HEK293 (cell line): ENCODE measurements at regions of chr11 and their contacts with region 1.

Region 1: DNA sequence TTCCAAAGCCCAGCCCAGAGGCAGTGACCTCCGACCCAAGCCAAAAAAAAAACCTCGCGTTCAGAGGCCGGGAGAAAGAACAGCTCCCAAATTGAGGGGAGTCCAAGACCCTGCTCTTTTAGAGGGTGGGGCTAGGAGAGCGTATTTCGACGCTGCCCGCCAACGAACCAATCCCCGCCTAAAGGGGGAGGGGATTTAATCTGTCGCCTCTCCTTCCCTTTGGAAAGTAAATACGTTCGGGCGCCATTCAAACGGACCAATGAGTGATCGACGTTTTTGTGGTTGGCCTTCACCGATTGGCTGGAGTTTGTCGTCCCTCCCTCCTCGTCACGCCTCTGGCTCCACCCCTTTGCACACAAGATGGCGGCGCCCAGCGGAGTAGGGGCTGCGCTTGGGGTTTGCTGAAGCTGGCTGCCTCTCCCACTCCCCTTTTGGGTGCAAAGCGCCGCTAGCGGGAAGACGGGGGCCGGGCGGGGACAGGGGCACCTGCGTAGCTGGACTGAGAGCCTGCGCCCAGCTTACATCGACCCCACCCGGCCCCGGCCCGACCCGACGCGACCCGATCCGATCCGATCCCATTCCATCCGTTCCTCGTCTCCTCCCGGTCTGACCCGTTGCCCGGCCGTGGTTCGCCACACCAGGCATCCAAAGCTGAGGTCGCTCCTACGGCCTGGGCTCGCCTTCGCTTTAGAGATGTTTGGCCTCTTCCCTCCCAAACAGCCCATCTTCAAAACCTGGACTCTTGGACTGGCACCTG is at the start of gene RNF26:
- H3K4me3 ChIP-seq: peak within 1 kb of the TSS; percentile 90
- H3K27ac ChIP-seq: peak within 1 kb of the TSS; percentile 18; the same call in 1 of the 2 replicates
- H3K4me1 ChIP-seq: no peaks in the 10 kb centered on the region
- CTCF ChIP-seq: no peak

Region 2: DNA sequence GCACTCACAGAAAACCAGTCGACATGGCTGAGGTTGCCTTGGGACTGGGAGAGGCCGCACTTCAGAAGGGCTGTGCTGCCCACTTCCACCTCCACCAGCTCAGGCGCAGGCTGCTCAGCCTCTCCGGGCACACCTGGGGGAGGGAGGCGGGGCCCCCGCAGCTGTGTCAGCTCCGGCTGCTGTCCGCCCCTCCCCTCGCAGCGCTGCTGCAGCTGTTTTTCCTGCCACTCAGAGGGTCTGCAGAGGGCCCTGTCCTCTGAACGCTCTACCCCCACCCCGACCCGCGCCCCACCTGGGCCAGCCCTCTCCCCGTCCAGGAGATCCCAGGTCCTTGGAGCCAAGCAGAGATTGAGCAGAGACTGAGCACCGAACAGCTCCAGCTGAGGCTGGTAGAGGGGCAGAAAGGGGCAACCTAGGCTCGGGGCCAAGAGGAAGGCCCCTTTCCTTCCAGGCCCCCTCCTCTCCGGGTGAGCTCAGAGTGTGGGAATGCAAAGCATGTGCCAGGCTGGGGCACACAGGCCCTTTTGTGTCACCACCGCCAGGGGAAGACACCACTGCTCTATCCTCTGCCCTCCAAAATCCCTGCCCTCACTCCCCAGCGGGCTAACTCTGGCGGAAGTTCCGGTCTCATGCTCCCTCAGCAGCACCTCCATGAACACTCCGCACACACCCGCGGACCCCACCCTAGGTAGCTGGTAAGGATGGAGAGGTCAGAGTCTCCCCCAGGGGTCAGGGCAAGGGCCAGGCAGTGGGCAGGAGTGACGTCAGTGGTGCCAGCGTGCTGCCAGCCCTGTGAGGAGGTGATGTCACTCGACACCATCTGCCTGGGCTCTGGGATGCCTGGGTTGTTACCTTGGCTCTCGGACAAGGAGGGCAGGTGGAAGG is 19.0 kb before region 1 on chr11:
- CTCF ChIA-PET with region 1: interaction called, 151 read pairs
- POLR2A ChIA-PET with region 1: interaction called, 15 read pairs
- H3K4me3 ChIP-seq: peak overlapping the region; percentile 67
- H3K27ac ChIP-seq: no peak overlapping the region
- H3K4me1 ChIP-seq: no peaks in the 10 kb centered on the region
- CTCF ChIP-seq: no peak

Region 3: DNA sequence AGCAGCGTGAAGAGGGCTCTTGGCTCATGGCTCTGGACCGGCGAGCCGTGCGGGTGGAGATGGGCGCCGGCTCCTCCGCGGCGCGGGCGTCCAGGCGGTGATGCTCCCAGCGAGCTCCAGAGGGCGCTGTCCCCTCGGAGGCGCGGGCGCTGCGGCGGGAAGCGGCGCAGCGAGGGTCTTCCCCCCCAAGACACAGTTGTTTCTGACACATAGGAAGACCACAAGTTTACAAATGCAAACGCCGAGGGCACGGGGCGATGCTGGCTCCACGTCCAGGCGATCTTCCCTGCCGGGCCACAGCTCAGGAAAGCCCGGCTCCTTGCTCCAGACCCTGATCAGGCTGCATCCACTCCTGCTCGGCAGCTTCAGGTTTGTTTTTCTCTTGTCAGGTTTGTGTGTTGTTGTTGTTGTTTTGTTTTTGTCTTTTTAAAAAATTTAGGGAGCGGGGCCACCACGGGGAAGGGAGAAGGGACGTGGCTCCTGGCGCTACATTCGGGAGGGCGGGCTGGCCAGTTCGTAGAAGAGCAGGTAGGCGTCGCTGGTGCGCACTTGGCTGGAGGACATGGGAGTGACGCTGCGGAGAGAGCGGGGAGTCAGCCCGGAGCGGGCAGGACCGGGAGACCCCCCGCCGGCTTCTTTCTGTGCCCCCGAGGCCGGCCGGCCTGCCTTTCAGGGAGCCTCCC is 22.1 kb after region 1 on chr11:
- CTCF ChIA-PET with region 1: interaction called, 15 read pairs
- POLR2A ChIA-PET with region 1: interaction called, 39 read pairs
- H3K4me3 ChIP-seq: no peak overlapping the region
- H3K27ac ChIP-seq: no peak overlapping the region
- H3K4me1 ChIP-seq: no peaks in the 10 kb centered on the region; the same call in 1 of the 2 replicates
- CTCF ChIP-seq: no peak

Region 4: DNA sequence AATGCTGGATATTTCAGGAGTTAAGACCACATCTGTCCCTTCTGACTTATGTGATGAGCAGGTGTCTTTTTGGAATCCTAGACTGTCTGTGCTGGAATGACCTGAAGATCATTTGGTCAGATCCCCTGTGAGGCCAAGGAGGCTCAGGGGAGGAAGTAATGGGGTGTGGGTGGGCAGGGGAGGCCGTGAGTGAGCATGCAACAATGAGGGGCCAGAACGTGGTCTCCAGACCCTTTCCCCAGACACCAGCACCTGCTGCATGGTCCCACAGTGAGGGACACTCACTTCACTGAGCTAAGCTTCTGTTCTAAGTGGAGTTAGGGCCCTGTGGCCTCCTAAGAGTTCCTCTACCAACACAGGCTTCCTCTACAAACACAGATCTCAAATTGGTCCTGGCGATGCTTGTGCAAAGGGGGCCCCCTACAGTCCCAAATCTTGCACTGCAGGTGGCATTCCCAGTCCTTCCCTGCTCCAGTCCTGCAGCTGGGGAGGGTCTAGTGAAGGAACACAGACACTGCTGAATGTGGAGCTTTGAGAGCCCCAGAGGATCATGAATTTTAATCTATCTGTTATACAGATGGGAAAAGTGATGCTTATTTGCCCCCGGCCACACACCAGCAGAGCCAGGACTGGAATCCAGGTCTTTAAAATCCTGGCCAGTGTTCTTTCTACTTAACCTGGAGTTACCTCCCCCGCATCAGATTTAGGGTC is 39.7 kb after region 1 on chr11:
- CTCF ChIA-PET with region 1: interaction called, 160 read pairs
- POLR2A ChIA-PET with region 1: interaction called, 20 read pairs
- H3K4me3 ChIP-seq: no peak overlapping the region
- H3K27ac ChIP-seq: no peak overlapping the region
- H3K4me1 ChIP-seq: peaks cover 2% of the 10 kb centered on the region; the same call in 1 of the 2 replicates
- CTCF ChIP-seq: peak; percentile 34; the same call in 1 of the 2 replicates

Region 5: DNA sequence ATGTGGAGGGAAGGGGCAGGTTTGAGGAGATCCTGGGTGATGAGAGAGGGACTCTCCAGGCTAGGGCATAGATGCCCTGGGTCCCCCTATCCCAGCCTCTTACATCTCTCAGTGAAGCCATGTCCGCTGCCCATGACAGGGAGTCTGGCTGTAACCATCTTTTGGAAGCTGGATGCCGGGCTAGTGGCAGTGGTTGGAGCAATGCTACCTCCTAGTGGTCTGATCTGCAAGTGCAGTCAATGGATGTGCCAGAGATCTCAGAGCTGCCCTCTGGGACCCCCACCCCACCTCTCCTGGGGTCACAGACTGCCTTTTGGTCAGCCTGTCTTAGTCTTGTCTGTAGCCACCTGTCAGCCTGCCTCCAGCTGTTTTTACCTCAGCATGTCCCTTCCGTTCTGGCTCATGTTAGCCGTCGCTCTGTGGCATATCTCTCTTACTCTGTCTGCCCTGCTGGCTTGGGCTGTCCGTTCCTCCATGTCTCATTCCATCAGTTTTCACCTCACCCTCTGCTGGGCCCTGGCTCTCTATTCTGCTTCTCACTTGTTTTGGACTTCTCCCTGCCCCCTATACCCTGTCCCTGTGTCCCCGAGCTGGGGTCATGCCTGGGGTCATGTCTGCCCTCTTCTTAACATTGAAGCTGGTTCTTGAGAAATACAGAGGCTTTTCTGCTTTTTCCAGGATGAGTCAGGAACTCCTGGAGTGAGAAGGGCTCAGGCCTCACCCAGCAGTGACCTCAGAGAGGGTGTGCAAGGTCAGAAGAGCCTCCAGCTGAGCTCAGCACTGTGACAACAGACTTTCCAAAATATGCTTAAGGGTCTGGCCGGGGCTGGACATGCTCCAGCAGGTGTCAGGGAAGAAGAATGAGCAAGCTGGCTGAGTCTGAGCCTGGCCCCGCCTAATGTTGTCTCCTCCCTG is 140.6 kb after region 1 on chr11:
- CTCF ChIA-PET with region 1: interaction called, 45 read pairs
- POLR2A ChIA-PET with region 1: interaction called, 3 read pairs
- H3K4me3 ChIP-seq: no peak overlapping the region
- H3K27ac ChIP-seq: no peak overlapping the region
- H3K4me1 ChIP-seq: no peaks in the 10 kb centered on the region
- CTCF ChIP-seq: peak; percentile 74